ENCODE measurements at regions of chr17 and their contacts with region 1.

Region 1: GRCh38 chr17:50297407-50297865 is 23.2 kb downstream of the TMEM92 start:
- DNase-seq: peak; percentile 63
- ATAC-seq: peak; percentile 91
- H3K4me3 ChIP-seq: no peak overlapping the region
- H3K27ac ChIP-seq: no peak overlapping the region
- H3K4me1 ChIP-seq: no peaks in the 10 kb centered on the region; the same call in none of the 2 replicates
- H3K27me3 ChIP-seq: no peaks in the 10 kb centered on the region
- CTCF ChIP-seq: peak; percentile 95
- POLR2A ChIP-seq: 0 out of 2 replicates have a peak, but pooled peaks have one; percentile 47
- RAD21 ChIP-seq: peak; percentile 98

Region 2: DNA sequence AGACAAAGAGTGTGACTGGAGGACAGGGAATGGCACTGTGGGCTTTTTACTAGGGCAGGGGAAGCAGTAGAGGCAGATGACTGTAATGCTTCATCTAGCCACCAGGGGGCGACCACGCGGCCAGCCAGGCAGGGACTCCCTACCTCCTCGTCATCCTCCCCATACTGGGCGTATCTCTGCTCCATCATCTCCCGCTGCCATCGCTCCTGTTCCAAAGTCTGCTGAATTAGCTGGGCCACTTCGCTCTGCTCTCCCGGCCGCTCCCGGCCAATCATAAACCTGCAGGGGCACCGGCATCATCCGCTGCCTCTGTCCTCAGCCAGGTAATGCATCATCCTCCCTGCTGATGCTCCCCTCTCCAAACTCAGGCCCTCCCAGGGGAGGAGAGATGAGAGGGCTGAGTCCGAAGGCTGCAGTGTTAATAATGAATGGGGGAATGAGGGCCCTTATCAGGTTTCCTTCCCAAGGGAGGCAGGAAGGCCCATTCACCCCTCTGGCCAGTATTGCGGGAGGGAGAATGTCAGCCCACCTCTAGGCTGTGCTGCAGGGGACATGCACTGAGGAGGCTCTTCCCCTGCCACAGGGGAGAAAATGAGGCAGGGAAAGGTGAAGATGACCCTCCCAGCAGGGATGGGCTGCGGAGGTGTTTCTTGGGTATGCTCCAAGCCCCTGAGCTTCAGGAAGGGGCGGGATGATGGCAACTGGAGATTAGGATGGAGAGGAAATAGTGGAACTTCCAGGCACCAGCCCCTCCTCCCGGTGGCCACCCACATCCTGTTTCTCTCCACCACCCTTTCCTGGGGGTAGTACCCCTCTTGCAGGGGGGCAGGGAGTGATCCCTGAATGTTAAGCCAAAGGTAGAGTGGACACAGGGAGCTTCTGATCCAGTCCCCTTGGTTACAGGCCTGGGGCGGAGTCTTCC is 157.2 kb before region 1 on chr17:
- CTCF ChIA-PET with region 1: interaction called, 3 read pairs
- POLR2A ChIA-PET with region 1: no interaction called
- dilution Hi-C with region 1: no loop called
- in situ Hi-C with region 1: no loop called
- intact Hi-C with region 1: loop called (anchors 1 kb)
- DNase-seq: peak; percentile 73
- ATAC-seq: peak; percentile 98
- H3K4me3 ChIP-seq: no peak overlapping the region
- H3K27ac ChIP-seq: no peak overlapping the region
- H3K4me1 ChIP-seq: no peaks in the 10 kb centered on the region
- H3K27me3 ChIP-seq: no peaks in the 10 kb centered on the region
- CTCF ChIP-seq: peak; percentile 89
- POLR2A ChIP-seq: no peak
- RAD21 ChIP-seq: peak; percentile 82

Region 3: DNA sequence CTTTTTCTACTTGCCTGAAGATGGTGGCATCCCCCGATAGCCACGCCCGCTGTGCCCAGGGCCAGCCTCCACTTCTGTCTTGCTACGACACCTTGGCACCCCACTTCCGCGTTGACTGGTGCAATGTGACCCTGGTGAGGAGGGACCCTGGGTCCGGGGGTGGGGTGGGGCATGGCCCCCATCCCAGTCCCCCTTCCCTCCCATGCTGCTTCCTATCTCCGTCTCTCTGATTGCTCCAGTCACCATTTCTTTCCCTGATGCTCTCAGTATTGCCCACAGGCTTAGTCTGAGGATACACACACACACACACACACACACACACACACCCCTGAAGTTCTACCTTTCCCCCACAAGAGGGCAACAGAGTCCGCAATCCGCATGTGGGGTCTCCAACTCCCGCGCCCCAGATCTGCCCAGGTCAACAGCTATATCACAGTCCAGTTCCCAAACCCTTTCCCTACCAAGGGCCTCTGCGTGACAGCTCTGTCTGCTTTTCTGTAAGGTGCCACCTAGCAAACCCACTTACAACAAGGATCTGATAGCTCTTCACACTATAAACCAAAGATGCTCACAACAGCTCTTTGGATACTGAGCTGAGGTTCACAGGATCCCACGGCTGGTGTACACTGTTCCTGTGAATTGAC is 128.2 kb before region 1 on chr17:
- CTCF ChIA-PET with region 1: interaction called, 54 read pairs
- POLR2A ChIA-PET with region 1: interaction called, 12 read pairs
- dilution Hi-C with region 1: no loop called
- in situ Hi-C with region 1: no loop called
- intact Hi-C with region 1: loop called (anchors 1 kb)
- DNase-seq: peak; percentile 74
- ATAC-seq: peak; percentile 66
- H3K4me3 ChIP-seq: no peak overlapping the region
- H3K27ac ChIP-seq: no peak overlapping the region
- H3K4me1 ChIP-seq: peaks cover 8% of the 10 kb centered on the region
- H3K27me3 ChIP-seq: no peaks in the 10 kb centered on the region
- CTCF ChIP-seq: peak; percentile 96
- POLR2A ChIP-seq: peak; percentile 59
- RAD21 ChIP-seq: peak; percentile 92

Region 4: DNA sequence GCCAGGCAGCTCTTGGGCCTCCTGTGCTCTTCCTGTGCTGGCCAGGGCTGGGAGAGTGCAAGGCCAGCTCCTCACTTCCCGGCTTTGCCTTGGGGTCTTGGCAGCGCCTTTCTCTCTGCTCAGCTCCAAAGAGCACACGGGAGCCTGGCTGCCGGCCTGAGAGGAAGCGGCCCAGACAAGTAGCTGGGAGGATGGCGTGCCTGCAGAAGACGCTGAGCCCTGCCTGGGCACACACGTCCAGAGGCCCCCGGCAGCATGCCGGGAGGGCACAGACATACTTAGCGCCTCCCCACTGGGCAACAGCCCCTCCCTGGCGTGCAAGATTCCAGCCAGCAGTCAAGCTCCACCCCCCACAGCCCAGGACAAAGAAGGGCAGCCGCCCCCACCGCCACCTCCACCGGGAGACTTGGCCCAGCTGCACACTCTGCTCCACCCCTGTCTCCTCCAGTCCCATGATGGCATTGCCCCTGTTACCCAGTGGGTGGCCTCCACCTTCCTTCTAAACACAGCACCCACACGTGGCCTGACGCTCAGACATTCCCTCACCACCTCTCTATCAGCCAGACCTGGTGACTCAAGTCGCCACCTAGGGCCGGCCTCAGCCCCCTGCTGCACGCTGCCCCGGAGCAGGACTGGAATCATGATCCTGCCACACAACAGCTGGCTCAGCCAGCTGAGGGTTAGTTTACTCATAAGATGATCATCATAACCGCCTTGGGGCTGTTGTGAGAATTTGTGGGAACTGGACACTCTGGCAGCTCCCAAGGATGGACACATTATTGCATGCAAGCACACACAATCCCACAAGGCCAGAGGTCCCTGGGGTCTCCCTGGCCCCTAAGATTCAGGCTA is 119.2 kb before region 1 on chr17:
- CTCF ChIA-PET with region 1: interaction called, 6 read pairs
- POLR2A ChIA-PET with region 1: interaction called, 12 read pairs
- dilution Hi-C with region 1: no loop called
- in situ Hi-C with region 1: no loop called
- intact Hi-C with region 1: no loop called
- DNase-seq: peak; percentile 99
- ATAC-seq: peak; percentile 63
- H3K4me3 ChIP-seq: no peak overlapping the region
- H3K27ac ChIP-seq: peak overlapping the region; percentile 84
- H3K4me1 ChIP-seq: peaks cover 30% of the 10 kb centered on the region
- H3K27me3 ChIP-seq: no peaks in the 10 kb centered on the region
- CTCF ChIP-seq: peak; percentile 53
- POLR2A ChIP-seq: no peak; the same call in 1 of the 2 replicates
- RAD21 ChIP-seq: no peak